T-cell (primary cell): ENCODE measurements at regions of chr13 and their contacts with region 1.

Region 1: GRCh38 chr13:52034616-52035226 is 10.2 kb downstream of the UTP14C start:
- DNase-seq: no peak
- ATAC-seq: no peak
- H3K4me3 ChIP-seq: no peak overlapping the region
- H3K4me3 Mint-ChIP-seq: no peak overlapping the region
- H3K27ac ChIP-seq: no peak overlapping the region
- H3K27ac Mint-ChIP-seq: no peak overlapping the region
- H3K4me1 ChIP-seq: no peaks in the 10 kb centered on the region
- H3K4me1 Mint-ChIP-seq: peaks cover 0 to 14% (median 13%) of the 10 kb centered on the region in 3 donors
- H3K27me3 ChIP-seq: no peaks in the 10 kb centered on the region
- H3K27me3 Mint-ChIP-seq: no peaks in the 10 kb centered on the region

Region 2: GRCh38 chr13:51873117-51873798 is 161.5 kb before region 1 on chr13:
- CTCF ChIA-PET with region 1: no interaction called
- POLR2A ChIA-PET with region 1: interaction called in 1 of 2 experiments, 10 read pairs
- DNase-seq: no peak
- ATAC-seq: no peak
- H3K4me3 ChIP-seq: no peak overlapping the region
- H3K4me3 Mint-ChIP-seq: no peak overlapping the region
- H3K27ac ChIP-seq: no peak overlapping the region
- H3K27ac Mint-ChIP-seq: no peak overlapping the region
- H3K4me1 ChIP-seq: no peaks in the 10 kb centered on the region
- H3K4me1 Mint-ChIP-seq: no peaks in the 10 kb centered on the region
- H3K27me3 ChIP-seq: no peaks in the 10 kb centered on the region
- H3K27me3 Mint-ChIP-seq: peaks cover 4 to 6% of the 10 kb centered on the region in 2 donors

Region 3: DNA sequence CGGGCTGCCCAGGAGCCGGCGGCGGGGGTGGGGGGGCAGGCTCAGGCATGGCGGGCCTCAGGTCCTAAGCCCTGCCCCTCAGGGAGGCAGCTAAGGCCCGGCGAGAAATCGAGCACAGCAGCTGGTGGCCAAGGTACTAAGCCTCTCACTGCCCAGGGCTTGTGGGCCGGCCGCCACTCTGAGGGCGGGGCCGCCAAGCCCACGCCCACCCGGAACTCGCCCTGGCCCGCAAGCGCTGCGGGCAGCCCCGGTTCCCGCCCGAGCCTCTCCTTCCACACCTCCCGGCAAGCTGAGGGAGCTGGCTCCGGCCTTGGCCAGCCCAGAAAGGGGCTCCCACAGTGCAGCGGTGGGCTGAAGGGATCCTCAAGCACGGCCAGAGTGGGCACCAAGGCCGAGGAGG is 780.6 kb after region 1 on chr13:
- CTCF ChIA-PET with region 1: no interaction called
- POLR2A ChIA-PET with region 1: no interaction called
- DNase-seq: no peak
- ATAC-seq: no peak
- H3K4me3 ChIP-seq: no peak overlapping the region
- H3K4me3 Mint-ChIP-seq: no peak overlapping the region
- H3K27ac ChIP-seq: no peak overlapping the region
- H3K27ac Mint-ChIP-seq: no peak overlapping the region
- H3K4me1 ChIP-seq: no peaks in the 10 kb centered on the region
- H3K4me1 Mint-ChIP-seq: no peaks in the 10 kb centered on the region
- H3K27me3 ChIP-seq: peaks cover 0 to 6% of the 10 kb centered on the region in 2 experiments
- H3K27me3 Mint-ChIP-seq: peaks cover 13 to 15% of the 10 kb centered on the region in 2 donors